OCI-LY7 (cell line): ENCODE measurements at regions of chr1 and their contacts with region 1.

Region 1: DNA sequence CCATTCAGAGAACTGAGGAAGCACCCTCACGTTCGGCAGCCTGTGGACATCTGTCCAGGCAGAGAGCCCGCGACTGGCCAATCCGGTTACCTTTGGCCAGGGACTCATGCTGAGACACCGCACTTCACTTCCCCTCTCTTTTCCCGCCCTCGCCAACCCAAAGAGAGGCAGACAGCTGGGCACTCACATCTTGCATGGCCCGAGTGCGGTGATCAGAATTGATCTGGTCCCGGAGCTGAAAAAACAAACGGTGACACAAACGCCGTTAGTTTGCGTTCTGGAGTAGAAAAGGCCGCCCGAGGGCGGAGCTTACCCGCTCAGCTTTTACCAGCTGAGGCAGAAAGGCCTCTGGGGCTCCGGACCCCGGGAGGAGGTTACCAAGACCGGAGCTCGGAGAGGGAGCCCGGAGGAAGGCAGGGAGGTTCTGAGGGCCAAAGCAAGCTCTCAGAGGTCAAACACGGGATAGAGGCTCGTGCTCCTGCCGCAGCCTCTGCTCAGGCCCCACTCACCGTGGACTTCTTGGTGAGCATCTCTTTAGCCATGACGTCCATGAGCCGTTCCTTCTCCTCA is 376 bp downstream of the SF3A3 start:
- DNase-seq: peak; percentile 56
- H3K4me3 ChIP-seq: peak overlapping the region; percentile 100
- H3K27ac ChIP-seq: peak overlapping the region; percentile 71
- H3K4me1 ChIP-seq: peaks cover 12% of the 10 kb centered on the region
- CTCF ChIP-seq: no peak

Region 2: GRCh38 chr1:37922767-37923550 is 66.5 kb before region 1 on chr1:
- CTCF ChIA-PET with region 1: no interaction called
- POLR2A ChIA-PET with region 1: interaction called, 3 read pairs
- intact Hi-C with region 1: loop called (anchors 2 kb)
- DNase-seq: peak; percentile 93
- H3K4me3 ChIP-seq: peak overlapping the region; percentile 37
- H3K27ac ChIP-seq: peak overlapping the region; percentile 98
- H3K4me1 ChIP-seq: peaks cover 77% of the 10 kb centered on the region
- CTCF ChIP-seq: peak; percentile 45

Region 3: GRCh38 chr1:38018864-38019343 is 29.5 kb after region 1 on chr1:
- CTCF ChIA-PET with region 1: no interaction called
- POLR2A ChIA-PET with region 1: interaction called, 3 read pairs
- intact Hi-C with region 1: loop called (anchors 2 kb)
- DNase-seq: peak; percentile 60
- H3K4me3 ChIP-seq: no peak overlapping the region
- H3K27ac ChIP-seq: no peak overlapping the region
- H3K4me1 ChIP-seq: peaks cover 8% of the 10 kb centered on the region
- CTCF ChIP-seq: peak; percentile 89

Region 4: DNA sequence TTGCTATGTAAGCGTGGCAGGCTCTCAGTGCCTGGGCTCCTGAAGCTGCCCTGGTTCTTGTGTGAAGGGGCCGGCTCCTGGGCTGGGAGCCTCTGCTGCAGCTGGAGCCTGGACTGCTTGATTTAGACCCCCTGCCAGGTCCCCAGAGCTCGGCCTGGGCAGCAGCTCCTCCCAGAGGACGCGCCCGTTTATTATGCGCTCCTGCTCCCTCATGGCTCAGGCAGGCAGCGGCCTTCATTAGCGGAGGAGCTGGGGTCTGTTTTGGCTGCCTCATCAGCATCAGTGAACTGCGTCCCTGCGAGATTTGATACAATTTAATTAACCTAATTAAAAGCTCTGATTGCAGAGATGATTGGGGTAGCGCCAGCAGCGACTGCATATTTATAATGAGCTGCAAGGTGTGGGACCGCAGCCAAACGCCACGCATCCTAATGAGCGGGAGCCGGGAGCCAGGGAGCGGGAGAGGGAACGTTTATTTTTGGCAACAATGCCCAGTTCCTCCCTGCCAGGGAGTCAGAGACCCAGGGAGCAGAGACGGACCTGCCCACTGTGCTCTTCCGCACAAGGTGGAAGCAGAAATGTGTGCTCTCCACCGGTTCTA is 39.7 kb after region 1 on chr1:
- CTCF ChIA-PET with region 1: no interaction called
- POLR2A ChIA-PET with region 1: no interaction called
- intact Hi-C with region 1: no loop called
- DNase-seq: no peak
- H3K4me3 ChIP-seq: no peak overlapping the region
- H3K27ac ChIP-seq: no peak overlapping the region
- H3K4me1 ChIP-seq: peaks cover 14% of the 10 kb centered on the region
- CTCF ChIP-seq: no peak

Region 5: DNA sequence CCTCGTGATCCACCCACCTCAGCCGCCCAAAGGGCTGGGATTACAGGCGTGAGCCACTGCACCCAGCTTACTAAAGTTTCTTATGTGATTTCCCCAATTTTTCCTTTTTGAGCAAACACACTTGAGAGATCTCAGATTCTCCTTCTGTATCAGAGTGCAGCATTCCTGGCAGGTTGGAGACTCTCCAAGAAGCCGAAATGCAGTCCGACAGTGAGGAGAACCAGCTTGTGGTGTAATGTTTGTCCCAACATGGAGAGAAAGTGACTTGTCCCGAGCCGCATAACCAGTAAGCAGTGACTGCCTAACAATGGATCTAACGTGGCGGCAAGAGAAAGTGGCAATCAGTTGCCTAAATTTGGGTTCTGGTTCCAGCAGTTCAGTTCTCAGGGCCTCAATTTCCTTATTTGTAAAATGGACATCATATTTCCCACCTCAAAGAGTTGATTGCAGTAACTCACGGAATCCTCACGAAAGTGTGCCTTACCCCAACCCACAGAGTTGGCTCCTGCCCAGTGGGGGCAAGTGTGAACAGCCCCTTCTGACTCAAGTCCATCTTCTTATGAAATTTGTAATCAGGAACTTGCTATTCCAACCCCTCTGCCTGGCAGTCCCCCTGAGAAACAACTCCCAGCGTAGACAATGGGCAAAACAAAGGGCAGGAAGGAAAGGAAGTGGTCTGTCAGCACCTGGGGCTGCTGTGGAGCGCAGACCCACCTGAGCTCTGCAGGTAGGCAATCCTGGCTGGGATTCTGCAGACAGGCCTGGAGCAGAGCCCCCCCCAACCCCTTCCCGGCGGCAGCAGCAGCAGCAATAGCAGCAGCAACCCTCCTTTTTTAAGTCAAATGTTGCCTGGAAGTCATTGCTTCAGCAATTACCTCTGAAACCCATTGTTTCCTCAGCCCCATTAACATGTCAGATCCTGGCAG is 280.7 kb after region 1 on chr1:
- CTCF ChIA-PET with region 1: no interaction called
- POLR2A ChIA-PET with region 1: no interaction called
- intact Hi-C with region 1: no loop called
- DNase-seq: no peak
- H3K4me3 ChIP-seq: no peak overlapping the region
- H3K27ac ChIP-seq: no peak overlapping the region
- H3K4me1 ChIP-seq: no peaks in the 10 kb centered on the region
- CTCF ChIP-seq: no peak